ENCODE measurements at regions of chr4 and their contacts with region 1.

Region 1: DNA sequence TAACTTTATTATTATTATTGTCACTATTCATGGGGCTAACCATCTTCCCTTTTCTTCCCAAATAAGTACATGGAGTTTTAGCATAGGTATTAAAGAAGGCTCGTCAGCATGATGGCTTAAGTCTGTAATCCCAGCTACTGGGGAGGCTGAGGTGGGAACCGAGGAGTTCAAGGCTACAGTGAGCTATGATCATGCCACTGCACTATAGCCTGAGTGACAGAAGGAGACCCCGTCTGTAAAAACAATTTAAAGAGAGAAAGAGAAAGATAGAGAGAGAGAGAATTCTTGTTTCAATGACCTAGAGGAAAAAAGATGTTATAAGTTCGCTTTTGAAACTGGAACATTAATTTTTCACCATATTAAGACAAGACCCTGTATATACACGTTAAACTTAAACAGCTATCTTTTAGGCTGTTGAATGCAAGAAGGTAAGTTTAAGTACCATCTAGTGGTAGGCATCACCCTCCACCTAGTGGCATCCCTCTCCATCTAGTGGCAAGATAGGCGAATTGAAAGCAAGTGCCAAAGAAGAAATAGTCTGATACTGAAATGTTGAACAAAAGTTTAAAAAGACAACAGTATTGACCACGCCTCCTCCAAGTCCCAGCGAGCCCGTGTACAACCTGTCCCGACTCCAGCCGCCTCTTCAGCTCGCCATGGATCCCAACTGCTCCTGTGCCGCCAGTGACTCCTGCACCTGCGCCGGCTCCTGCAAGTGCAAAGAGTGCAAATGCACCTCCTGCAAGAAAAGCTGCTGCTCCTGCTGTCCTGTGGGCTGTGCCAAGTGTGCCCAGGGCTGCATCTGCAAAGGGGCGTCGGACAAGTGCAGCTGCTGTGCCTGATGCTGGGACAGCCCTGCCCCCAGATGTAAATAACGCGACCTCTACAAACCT is 26.0 kb upstream of the YTHDC1 start:
- DNase-seq: no peak
- H3K4me3 ChIP-seq: no peak overlapping the region
- H3K27ac ChIP-seq: no peak overlapping the region
- H3K4me1 ChIP-seq: no peaks in the 10 kb centered on the region
- H3K27me3 ChIP-seq: peaks cover 38% of the 10 kb centered on the region
- CTCF ChIP-seq: peak; percentile 83

Region 2: GRCh38 chr4:67785528-67785927 is 590.4 kb before region 1 on chr4:
- intact Hi-C with region 1: no loop called
- DNase-seq: no peak
- H3K4me3 ChIP-seq: no peak overlapping the region
- H3K27ac ChIP-seq: no peak overlapping the region
- H3K4me1 ChIP-seq: no peaks in the 10 kb centered on the region
- H3K27me3 ChIP-seq: no peaks in the 10 kb centered on the region
- CTCF ChIP-seq: no peak

Region 3: GRCh38 chr4:68228568-68228967 is 147.3 kb before region 1 on chr4:
- intact Hi-C with region 1: no loop called
- DNase-seq: no peak
- H3K4me3 ChIP-seq: no peak overlapping the region
- H3K27ac ChIP-seq: no peak overlapping the region
- H3K4me1 ChIP-seq: no peaks in the 10 kb centered on the region
- H3K27me3 ChIP-seq: no peaks in the 10 kb centered on the region
- CTCF ChIP-seq: no peak

Region 4: DNA sequence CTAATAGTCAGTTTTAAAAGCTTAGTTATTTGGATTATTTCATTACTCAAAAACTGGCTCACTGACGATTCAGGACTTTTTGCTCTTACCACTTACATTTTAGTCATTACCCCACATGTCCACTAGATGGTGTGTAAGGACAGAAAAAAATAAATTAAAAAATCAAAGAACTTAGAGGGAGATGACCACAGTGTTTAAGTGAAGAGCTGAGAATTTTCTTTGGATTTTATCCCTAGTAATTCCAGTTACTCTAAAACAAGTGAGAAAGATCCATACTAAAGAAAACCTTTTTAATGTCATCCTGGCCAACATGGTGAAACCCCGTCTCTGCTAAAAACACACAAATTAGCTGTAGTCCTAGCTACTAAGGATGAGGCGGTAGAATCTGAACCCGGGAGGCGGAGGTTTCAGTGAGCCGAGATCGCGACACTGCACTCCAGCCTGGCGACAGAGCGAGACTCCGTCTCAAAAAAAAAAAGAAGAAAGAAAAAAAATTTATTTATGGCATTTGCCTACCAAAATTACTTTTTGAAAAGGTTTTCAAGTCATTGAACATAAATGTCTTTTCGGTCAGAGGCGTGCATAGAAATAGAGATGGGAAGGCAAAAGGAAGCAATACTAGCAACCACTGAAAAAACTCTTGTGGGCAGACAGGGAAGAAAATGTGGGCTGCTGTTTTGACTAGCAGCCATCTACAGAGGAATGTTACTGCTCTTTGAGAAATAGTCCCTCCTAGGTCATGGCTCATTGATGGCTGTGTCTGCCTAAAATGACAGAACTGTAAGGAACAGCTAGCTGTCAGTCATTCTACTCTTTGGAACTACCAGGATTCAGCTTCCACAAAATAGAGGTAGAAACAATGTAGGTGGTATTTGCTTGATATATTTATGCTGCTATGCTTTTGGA is 103.8 kb before region 1 on chr4:
- intact Hi-C with region 1: loop called (anchors 2 kb)
- DNase-seq: no peak
- H3K4me3 ChIP-seq: peak overlapping the region; percentile 41
- H3K27ac ChIP-seq: no peak overlapping the region
- H3K4me1 ChIP-seq: no peaks in the 10 kb centered on the region
- H3K27me3 ChIP-seq: peaks cover 12% of the 10 kb centered on the region
- CTCF ChIP-seq: peak; percentile 82